Mammary epithelial cell (primary cell): ENCODE measurements at regions of chr19 and their contacts with region 1.

Region 1: DNA sequence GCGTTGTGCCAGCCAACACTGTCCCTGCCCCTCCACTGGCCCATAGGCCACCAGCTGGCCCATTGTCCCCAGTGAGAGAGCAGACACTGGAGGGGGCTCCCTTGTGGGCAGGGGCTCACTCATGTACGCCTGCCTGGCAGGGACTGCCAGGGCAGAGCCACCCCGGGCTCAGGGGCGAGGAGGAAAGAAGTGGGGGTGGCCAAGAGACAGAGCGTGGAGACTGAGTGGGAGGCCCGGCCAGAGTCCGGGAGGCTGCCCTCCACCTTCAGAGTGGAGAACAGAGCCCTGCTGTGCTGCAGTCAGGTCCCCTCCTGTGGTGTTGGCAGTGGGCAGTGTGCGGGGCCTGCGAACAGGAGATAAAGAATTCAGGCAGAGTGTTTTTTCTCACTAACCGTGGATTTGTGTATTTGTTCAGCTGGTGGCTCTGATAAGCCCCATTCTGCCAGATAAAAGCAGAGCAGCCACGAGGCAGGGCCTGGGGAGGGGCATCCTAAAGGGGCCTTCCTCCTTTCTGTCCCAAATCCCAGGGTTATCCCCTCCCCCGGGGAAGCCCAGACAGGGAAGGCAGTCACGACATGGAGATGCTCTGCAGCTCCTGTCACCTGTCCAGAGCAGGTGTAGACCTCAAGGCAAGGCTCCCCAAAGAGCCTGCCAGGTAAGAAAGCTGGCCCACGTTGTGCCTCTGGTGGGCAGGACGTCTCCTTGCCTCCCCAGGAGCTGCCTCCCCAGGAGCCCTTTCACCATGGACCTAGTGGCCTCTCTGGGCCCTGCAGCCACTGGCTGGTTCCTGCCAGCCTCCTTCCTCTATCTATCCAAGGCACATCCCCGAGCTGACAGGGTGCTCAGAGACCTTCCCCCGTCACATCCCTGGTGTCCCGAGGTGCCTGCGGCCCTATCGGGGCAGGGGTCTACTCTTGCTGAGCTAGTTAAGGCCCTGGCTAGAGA is 33.0 kb downstream of the LYL1 start:
- DNase-seq: no peak
- H3K4me3 ChIP-seq: no peak overlapping the region
- H3K27ac ChIP-seq: no peak overlapping the region
- H3K4me1 ChIP-seq: no peaks in the 10 kb centered on the region
- H3K27me3 ChIP-seq: no peaks in the 10 kb centered on the region
- CTCF ChIP-seq: no peak

Region 2: GRCh38 chr19:12580163-12580694 is 489.5 kb before region 1 on chr19:
- CTCF ChIA-PET with region 1: no interaction called
- dilution Hi-C with region 1: no loop called
- in situ Hi-C with region 1: no loop called
- intact Hi-C with region 1: no loop called
- DNase-seq: no peak
- H3K4me3 ChIP-seq: no peak overlapping the region
- H3K27ac ChIP-seq: no peak overlapping the region
- H3K4me1 ChIP-seq: no peaks in the 10 kb centered on the region
- H3K27me3 ChIP-seq: no peaks in the 10 kb centered on the region
- CTCF ChIP-seq: no peak

Region 3: DNA sequence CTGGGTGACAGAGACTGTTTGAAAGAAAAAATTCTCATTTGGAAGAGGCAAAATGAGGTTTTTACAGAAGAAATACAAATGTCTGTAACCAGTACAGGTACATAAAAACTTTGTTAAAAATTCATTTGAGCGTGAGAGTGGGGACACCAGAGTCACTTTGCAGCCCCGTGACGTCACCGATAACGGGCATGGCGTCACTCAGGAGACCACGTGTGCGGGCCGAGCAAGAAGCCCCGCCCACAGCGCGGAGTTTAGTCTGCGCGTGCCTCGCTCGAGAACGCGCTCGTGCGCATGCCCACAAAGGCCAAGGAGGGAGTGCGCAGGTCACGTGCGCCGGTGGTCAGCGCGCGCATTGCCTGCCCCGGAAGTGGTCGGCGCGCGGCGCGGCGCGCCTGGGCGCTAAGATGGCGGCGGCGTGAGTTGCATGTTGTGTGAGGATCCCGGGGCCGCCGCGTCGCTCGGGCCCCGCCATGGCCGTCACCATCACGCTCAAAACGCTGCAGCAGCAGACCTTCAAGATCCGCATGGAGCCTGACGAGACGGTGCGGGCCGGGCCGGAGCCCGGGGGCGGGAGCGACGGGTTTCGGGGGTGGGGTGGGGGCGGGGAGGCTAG is 124.1 kb before region 1 on chr19 and contains the start of gene RAD23A:
- CTCF ChIA-PET with region 1: no interaction called
- dilution Hi-C with region 1: loop called (anchors 5 kb)
- in situ Hi-C with region 1: no loop called
- intact Hi-C with region 1: no loop called
- DNase-seq: peak; percentile 96
- H3K4me3 ChIP-seq: peak within 1 kb of the TSS; percentile 67 to 89 (median 85)
- H3K27ac ChIP-seq: peak within 1 kb of the TSS; percentile 90
- H3K4me1 ChIP-seq: peaks cover 27% of the 10 kb centered on the region
- H3K27me3 ChIP-seq: no peaks in the 10 kb centered on the region
- CTCF ChIP-seq: no peak
- total RNA-seq, gene RAD23A: 101 to 123 TPM

Region 4: DNA sequence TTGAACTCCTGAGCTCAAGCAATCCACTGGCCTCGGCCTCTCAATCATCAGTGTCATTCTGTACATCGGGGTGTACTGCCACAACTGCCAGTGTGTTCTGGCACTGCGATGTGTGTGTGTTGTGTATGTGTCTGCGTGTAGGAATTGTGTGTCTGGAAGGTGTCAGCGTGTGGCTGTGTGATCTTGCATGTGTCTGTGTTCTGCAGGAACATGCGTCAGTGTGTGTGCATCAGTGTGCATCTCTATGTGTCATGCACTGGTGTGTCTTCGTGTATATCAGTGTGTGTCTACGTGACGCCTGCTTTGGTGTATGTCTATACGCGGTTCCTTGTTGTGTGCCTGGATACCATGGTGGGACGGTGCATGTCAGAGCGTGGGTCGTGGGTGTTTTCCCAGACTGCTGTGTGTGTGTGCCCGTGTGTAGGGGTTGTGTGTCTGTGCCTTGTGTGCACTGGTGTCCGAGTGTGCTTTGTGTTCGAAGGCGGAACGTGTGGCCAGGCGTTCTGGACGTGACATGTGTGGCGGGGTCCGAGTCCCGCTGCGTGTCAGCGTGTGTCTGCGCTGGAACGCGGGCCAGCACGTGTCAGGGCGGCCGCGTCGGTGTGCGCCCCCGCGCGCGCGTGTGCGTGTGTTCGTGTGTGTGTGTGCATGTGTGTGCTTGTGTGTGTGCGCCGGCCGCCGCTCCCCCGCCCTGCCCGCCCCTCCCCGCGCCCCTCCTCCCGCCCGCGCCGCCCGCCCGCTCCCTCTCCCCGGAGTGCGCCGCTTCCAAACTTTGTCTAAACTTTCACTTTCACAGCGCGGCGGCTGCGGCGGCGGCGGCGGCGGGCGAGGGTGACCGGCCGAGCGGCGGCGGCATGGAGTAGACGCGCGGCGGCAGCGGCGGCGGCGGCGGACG is 74.7 kb before region 1 on chr19 and contains the start of gene NFIX:
- CTCF ChIA-PET with region 1: no interaction called
- dilution Hi-C with region 1: loop called (anchors 5 kb)
- in situ Hi-C with region 1: no loop called
- intact Hi-C with region 1: no loop called
- DNase-seq: peak; percentile 62
- H3K4me3 ChIP-seq: peak within 1 kb of the TSS; percentile 55 to 97 (median 91)
- H3K27ac ChIP-seq: peak within 1 kb of the TSS; percentile 47
- H3K4me1 ChIP-seq: peaks cover 19% of the 10 kb centered on the region
- H3K27me3 ChIP-seq: no peaks in the 10 kb centered on the region
- CTCF ChIP-seq: no peak
- total RNA-seq, gene NFIX: 43.2 to 76.1 TPM